ENCODE measurements at regions of chr20 and their contacts with region 1.

Region 1: DNA sequence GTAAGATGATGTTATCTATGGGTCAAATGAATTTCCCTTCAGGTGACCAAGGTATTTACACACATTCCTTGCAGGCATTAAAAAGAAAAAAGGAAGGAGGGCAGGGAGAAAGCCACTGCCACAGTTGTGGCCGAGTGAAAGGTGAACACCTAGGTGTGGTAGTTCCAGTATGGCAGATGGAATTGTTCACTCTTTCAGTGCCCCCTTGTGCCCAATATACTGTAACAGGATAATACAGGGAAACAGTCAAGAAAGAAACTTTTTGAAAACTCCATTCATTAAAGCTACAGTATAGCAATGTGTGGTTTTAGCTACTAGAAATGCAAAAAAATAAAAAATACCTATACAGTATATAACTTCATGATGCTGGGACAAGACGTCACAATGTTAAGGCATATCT is 52.1 kb downstream of the BMP2 start:
- DNase-seq: no peak
- H3K4me3 ChIP-seq: no peak overlapping the region
- H3K27ac ChIP-seq: no peak overlapping the region
- H3K4me1 ChIP-seq: no peaks in the 10 kb centered on the region
- H3K27me3 ChIP-seq: no peaks in the 10 kb centered on the region
- CTCF ChIP-seq: peak; percentile 44

Region 2: DNA sequence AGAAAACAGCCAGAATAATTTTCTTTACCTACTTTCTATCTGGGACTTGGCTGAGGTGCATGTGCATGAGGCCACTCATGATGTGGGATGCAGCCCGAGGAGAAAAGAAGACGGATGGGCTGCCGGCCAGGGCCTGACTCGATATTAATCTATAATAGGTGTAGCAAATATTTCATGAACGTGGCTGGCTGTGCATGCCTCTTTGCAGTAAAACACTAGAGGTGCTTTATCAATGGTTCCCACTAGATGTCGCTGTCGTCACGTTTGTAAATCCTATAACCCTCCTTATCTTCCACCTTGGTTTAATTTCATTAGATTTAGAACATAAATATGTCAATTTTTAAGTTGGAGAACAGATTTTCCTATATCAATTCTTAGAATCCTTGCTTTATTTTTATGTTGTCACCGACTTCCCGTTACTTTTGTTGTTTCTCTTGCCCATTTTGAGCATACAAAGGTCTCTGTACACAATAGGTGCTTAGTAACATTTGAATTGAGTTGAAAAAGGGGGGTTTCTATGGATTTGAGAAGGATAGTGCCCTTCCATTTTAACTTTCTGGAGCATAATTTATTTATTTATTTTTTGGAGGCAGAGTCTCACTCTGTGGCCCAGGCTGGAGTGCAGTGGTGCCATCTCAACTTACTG is 677.1 kb before region 1 on chr20:
- CTCF ChIA-PET with region 1: no interaction called
- dilution Hi-C with region 1: no loop called
- in situ Hi-C with region 1: no loop called
- intact Hi-C with region 1: loop called (anchors 10 kb)
- DNase-seq: peak; percentile 36
- H3K4me3 ChIP-seq: no peak overlapping the region
- H3K27ac ChIP-seq: no peak overlapping the region
- H3K4me1 ChIP-seq: no peaks in the 10 kb centered on the region
- H3K27me3 ChIP-seq: no peaks in the 10 kb centered on the region
- CTCF ChIP-seq: peak; percentile 76 to 88

Region 3: DNA sequence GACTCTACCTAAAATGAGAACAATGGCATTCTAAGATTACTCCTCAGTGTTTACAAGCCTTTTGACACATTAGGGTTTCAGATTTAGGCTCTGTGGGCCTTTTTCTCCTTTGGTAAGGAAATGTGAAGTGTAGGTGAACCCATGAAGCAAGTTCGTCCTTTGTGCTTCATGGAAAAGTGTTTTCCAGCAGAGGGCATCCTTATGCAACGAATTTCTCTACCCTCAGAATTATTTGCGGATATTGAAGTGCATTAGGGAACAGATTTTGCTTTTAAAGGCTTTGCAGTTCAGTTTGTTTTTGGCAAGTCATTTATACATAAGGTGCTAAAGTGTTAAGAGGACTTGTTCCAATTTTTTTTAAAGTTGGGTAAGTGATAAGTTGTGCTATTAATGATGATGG is 641.1 kb before region 1 on chr20:
- CTCF ChIA-PET with region 1: no interaction called
- dilution Hi-C with region 1: no loop called
- in situ Hi-C with region 1: no loop called
- intact Hi-C with region 1: loop called (anchors 2 kb)
- DNase-seq: peak; percentile 32
- H3K4me3 ChIP-seq: no peak overlapping the region
- H3K27ac ChIP-seq: no peak overlapping the region
- H3K4me1 ChIP-seq: no peaks in the 10 kb centered on the region
- H3K27me3 ChIP-seq: peaks cover 3% of the 10 kb centered on the region
- CTCF ChIP-seq: peak; percentile 36 to 64

Region 4: GRCh38 chr20:6583134-6583738 is 236.4 kb before region 1 on chr20:
- CTCF ChIA-PET with region 1: no interaction called
- dilution Hi-C with region 1: no loop called
- in situ Hi-C with region 1: no loop called
- intact Hi-C with region 1: loop called (anchors 1 kb)
- DNase-seq: peak; percentile 58
- H3K4me3 ChIP-seq: no peak overlapping the region
- H3K27ac ChIP-seq: no peak overlapping the region
- H3K4me1 ChIP-seq: peaks cover 10% of the 10 kb centered on the region
- H3K27me3 ChIP-seq: no peaks in the 10 kb centered on the region
- CTCF ChIP-seq: peak; percentile 72 to 80

Region 5: DNA sequence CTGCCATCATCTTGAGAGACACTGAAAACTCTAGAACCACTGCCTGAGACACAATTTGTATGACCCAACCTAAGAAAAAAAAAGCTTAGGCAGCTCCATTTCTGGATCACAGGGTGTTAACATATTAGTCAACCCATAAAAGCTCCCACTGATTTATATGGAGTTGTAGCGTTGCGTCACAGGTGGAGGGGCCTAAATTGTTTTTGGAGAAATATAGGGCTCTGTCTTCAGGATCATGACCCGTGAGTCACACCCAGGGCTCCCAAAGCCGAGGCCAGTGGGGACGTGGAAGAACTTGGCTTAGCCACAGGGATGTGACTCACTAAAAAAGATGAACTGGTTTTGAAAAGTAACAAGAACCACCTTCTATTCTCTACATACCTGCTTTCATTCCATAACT is 168.6 kb before region 1 on chr20:
- CTCF ChIA-PET with region 1: interaction called, 14 read pairs
- dilution Hi-C with region 1: no loop called
- in situ Hi-C with region 1: no loop called
- intact Hi-C with region 1: no loop called
- DNase-seq: peak; percentile 98
- H3K4me3 ChIP-seq: no peak overlapping the region
- H3K27ac ChIP-seq: peak overlapping the region; percentile 35
- H3K4me1 ChIP-seq: peaks cover 36% of the 10 kb centered on the region
- H3K27me3 ChIP-seq: no peaks in the 10 kb centered on the region
- CTCF ChIP-seq: no peak

Region 6: GRCh38 chr20:6784210-6784611 is 35.4 kb before region 1 on chr20:
- CTCF ChIA-PET with region 1: no interaction called
- dilution Hi-C with region 1: no loop called
- in situ Hi-C with region 1: no loop called
- intact Hi-C with region 1: no loop called
- DNase-seq: no peak
- H3K4me3 ChIP-seq: no peak overlapping the region
- H3K27ac ChIP-seq: no peak overlapping the region
- H3K4me1 ChIP-seq: no peaks in the 10 kb centered on the region
- H3K27me3 ChIP-seq: no peaks in the 10 kb centered on the region
- CTCF ChIP-seq: no peak

Region 7: DNA sequence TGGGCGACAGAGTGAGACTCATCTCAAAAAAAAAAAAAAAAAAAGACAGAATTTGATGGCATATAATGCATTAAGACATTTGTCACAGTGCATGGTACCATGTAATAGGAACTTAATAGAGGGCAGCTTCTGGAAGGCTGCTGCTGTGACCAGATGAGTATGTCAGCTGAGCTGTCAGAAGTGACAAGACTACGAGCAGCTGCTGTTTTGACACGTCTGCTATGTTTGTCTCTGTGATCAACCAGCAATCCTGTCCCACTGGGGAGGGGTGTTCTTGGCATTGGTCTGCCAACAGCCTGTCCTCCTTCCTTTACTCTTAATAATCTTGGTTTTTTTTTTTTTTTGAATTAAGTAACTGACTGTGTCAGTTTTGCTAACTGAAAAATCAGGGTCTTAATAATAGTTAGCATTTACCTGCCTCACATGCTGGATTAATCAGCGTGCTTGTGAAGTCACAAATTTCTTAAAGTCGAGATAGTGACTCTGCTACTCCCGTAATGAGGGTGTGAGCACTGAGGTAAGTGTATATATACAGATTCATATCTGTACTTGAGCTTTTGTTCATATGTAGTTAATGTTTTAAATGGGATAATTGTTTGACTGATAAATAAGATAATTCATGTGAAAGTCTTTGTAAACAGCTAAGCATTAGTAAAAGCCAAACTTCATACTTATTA is 100.3 kb after region 1 on chr20:
- CTCF ChIA-PET with region 1: no interaction called
- dilution Hi-C with region 1: no loop called
- in situ Hi-C with region 1: no loop called
- intact Hi-C with region 1: no loop called
- DNase-seq: no peak
- H3K4me3 ChIP-seq: no peak overlapping the region
- H3K27ac ChIP-seq: no peak overlapping the region
- H3K4me1 ChIP-seq: peaks cover 1% of the 10 kb centered on the region
- H3K27me3 ChIP-seq: no peaks in the 10 kb centered on the region
- CTCF ChIP-seq: no peak